ENCODE measurements at regions of chr2 and their contacts with region 1.

Region 1: GRCh38 chr2:26244309-26245121 is at the starts of genes HADHA and HADHB:
- DNase-seq: peak; percentile 76
- H3K4me3 Mint-ChIP-seq: peak within 1 kb of the TSS; percentile 98
- H3K27ac Mint-ChIP-seq: peak within 1 kb of the TSS; percentile 96
- H3K4me1 Mint-ChIP-seq: peaks cover 44% of the 10 kb centered on the region
- H3K27me3 Mint-ChIP-seq: peaks cover 8% of the 10 kb centered on the region
- total RNA-seq, gene HADHA: 96.8 and 99.9 TPM in 2 replicates
- total RNA-seq, gene HADHB: 78.8 and 78.9 TPM in 2 replicates

Region 2: DNA sequence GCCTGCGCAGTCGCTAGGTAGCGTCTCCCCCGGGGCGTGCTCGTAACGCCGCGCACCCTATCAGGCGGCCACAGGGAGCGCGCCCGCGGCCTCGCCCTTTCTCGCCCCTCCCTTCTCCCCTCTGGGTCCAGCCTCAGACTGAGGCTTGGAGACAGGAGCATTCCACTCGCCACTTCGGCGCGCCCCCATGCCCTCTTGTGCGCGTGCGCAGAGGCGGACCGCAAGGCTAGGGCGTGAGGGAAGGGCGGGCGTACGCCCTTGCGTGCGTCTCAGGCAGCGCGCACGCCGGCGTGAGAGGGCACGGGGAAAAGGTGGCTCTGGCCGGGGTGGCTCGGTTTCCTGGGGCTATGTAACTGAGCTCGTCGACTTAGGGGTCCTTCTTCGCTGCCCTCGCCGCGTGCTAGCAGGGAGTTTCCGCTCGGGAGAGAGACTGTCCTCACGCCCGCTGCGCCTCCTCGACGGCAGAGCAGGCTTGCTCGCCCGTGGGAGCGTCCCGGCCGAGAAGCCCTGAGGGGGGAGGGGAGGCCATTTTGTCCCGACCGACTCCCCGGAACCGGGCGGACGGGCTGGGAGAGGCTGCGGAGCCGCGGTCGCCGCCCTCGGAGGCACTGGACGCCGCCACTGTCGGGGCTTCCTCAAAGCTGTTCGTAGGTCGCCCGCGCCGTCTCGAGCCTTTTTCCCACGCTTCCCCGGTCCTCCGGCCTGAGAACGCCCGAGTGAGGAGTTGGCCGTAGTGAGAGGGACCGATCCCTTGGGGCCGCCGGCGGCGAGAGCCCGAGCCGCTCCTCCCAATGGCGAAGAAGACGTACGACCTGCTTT is 210.5 kb before region 1 on chr2 and contains the start of gene RAB10:
- intact Hi-C with region 1: loop called (anchors 1 kb)
- DNase-seq: peak; percentile 100
- H3K4me3 Mint-ChIP-seq: peak within 1 kb of the TSS; percentile 94
- H3K27ac Mint-ChIP-seq: peak within 1 kb of the TSS; percentile 93
- H3K4me1 Mint-ChIP-seq: peaks cover 26% of the 10 kb centered on the region
- H3K27me3 Mint-ChIP-seq: no peaks in the 10 kb centered on the region
- total RNA-seq, gene RAB10: 128 and 130 TPM in 2 replicates

Region 3: DNA sequence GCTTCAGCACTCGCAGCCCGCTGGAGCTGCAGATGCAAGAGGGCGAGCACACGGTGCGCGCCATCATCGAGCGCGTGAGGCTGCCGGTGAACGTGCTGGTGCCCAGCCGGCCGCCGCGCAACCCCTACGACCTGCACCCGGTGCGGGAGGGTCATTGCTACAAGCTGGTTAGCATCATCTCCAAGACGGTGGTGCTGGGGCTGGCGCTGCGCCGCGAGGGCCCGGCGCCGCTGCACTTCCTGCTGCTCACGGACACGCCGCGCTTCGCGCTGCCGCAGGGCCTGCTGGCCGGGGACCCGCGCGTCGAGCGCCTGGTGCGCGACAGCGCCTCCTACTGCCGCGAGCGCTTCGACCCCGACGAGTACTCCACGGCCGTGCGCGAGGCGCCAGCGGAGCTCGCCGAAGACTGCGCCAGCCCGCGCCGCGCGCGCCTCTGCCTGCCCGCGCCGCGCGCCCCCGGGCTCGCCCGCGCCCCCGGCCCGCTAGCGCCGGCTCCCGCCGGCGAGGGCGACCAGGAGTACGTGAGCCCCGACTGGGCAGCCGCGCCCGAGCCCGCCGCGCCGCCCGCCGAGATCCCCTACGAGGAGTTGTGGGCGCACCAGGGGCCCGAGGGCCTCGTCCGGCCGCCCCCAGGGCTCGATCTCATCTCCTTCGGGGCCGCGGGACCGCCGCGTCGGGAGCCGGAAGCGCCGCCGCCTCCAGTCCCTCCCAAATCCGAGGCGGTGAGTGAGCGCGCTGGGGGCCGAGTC is 59.8 kb before region 1 on chr2:
- intact Hi-C with region 1: loop called (anchors 2 kb)
- DNase-seq: peak; percentile 86
- H3K4me3 Mint-ChIP-seq: peak overlapping the region; percentile 81
- H3K27ac Mint-ChIP-seq: no peak overlapping the region
- H3K4me1 Mint-ChIP-seq: peaks cover 12% of the 10 kb centered on the region
- H3K27me3 Mint-ChIP-seq: peaks cover 22% of the 10 kb centered on the region

Region 4: DNA sequence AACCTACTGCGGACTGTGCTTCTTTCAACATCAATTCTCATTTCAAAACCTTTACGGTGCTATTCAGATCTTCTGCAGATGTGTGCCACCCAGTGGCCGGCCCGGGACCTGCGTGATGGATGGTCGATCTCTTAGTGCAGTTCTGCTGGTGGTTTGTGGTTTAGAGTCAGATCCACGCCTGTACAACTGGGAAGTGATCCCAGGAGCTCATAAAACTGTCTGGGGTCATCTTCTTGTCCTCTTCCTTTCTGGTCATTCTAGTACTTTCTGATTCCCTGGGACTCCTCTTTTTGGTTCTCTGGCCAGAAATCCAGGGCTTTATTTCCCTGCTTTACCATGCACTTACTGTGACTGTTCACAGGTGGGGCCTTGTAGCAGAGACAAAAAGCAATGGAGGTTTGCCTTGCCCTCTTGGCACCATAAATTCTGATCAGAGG is 85.6 kb after region 1 on chr2:
- intact Hi-C with region 1: loop called (anchors 1 kb)
- DNase-seq: peak; percentile 70
- H3K4me3 Mint-ChIP-seq: no peak overlapping the region
- H3K27ac Mint-ChIP-seq: no peak overlapping the region
- H3K4me1 Mint-ChIP-seq: peaks cover 13% of the 10 kb centered on the region
- H3K27me3 Mint-ChIP-seq: no peaks in the 10 kb centered on the region

Region 5: GRCh38 chr2:26469092-26469710 is 224.7 kb after region 1 on chr2:
- intact Hi-C with region 1: loop called (anchors 2 kb)
- DNase-seq: peak; percentile 37
- H3K4me3 Mint-ChIP-seq: no peak overlapping the region
- H3K27ac Mint-ChIP-seq: no peak overlapping the region
- H3K4me1 Mint-ChIP-seq: no peaks in the 10 kb centered on the region
- H3K27me3 Mint-ChIP-seq: no peaks in the 10 kb centered on the region

Measured in activated T-helper 1 cell treated with anti-CD3 and anti-CD28 coated beads, Interleukin-12 subunit alpha, Interleukin-12 subunit beta, Interleukin-2, Interleukin-4 antibody, amounts not matched to agents 30 ng/mL and 10 ng/mL and 1 ng/mL, durations not matched to agents 14 hours and 24 hours and 36 hours (primary cell).